ENCODE measurements at regions of chr9 and their contacts with region 1.

Region 1: DNA sequence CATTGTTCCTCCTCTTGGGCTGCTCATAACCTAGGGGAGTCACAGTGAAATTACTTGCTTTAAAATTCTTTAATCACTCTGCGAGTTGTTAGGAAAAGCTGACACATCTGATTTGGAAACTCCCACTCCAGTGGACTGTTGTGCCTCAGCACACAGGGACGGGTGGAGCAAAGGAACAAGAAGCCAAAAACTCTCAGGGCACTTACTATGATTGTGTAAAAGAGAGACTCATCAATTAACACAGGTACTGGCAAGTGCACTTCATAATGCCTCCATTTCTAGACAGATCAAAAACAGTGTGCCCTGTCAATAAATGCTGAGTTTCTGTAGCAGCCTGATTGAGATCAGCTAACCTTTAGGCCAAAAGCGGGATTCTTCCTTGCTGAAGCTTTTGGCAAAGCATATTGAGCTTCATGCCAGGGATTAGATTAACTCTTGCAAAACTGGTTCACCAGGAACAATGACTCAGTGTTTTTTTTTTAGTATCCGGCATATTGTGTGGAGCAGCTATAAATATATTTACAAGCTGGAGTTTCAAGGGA is 55.9 kb downstream of the TMC1 start:
- DNase-seq: no peak
- H3K4me3 ChIP-seq: no peak overlapping the region
- H3K27ac ChIP-seq: peak overlapping the region; percentile 48 to 76 (median 64)
- H3K4me1 ChIP-seq: peaks cover 0 to 37% (median 25%) of the 10 kb centered on the region in 4 donors
- H3K27me3 ChIP-seq: no peaks in the 10 kb centered on the region
- CTCF ChIP-seq: no peak
- EP300 ChIP-seq: no peak
- POLR2A ChIP-seq: no peak

Region 2: DNA sequence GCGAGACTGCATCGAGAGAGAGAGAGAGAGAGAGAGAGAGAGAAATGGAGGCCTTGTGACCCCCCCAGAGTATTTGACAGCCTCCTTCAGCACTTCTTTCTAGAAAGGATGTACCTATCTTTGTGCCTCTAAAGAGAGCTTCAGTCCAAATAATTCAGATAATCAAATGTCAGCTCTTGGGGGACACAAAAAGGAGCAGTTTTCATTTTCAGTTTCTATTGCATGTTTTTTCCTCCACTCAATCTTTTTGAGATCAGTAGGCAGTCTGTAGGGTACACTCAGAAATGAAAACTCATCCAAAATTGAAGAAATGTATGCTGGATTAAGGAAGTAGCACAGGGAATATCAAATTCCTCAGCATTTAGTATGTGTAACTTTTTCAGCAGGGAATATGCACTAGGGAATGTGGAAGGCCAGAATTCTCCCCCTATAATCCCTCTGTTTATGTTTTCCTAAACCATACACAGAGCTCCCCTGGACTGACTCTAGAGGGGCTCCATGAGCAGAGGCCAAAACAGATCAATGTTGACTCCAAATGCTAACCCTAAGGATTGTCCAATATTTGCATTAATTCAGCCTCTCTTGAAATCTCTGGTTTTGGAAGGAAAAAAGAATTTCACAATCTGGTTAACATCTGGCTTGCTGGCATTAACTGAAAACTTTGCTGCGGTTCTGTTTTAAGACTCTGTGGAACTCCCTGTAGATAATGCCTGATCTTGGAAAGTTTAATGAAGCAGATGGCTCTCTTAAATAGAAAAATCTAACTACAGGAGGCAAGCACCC is 1059.0 kb before region 1 on chr9:
- intact Hi-C with region 1: no loop called
- DNase-seq: no peak
- H3K4me3 ChIP-seq: no peak overlapping the region
- H3K27ac ChIP-seq: no peak overlapping the region
- H3K4me1 ChIP-seq: no peaks in the 10 kb centered on the region
- H3K27me3 ChIP-seq: no peaks in the 10 kb centered on the region
- CTCF ChIP-seq: no peak
- EP300 ChIP-seq: no peak
- POLR2A ChIP-seq: no peak

Region 3: GRCh38 chr9:72533337-72533736 is 43.9 kb before region 1 on chr9:
- intact Hi-C with region 1: loop called (anchors 5 kb)
- DNase-seq: peak; percentile 72
- H3K4me3 ChIP-seq: no peak overlapping the region
- H3K27ac ChIP-seq: peak overlapping the region in 3 of 4 donors; percentile 49 to 77 (median 63)
- H3K4me1 ChIP-seq: peaks cover 0 to 18% (median 14%) of the 10 kb centered on the region in 4 donors
- H3K27me3 ChIP-seq: no peaks in the 10 kb centered on the region
- CTCF ChIP-seq: no peak
- EP300 ChIP-seq: peak in 2 of 4 donors; percentile 27 to 49
- POLR2A ChIP-seq: no peak

Measured in sigmoid colon (tissue), 7 donors.